HEK293T (cell line): ENCODE measurements at regions of chr7 and their contacts with region 1.

Region 1: DNA sequence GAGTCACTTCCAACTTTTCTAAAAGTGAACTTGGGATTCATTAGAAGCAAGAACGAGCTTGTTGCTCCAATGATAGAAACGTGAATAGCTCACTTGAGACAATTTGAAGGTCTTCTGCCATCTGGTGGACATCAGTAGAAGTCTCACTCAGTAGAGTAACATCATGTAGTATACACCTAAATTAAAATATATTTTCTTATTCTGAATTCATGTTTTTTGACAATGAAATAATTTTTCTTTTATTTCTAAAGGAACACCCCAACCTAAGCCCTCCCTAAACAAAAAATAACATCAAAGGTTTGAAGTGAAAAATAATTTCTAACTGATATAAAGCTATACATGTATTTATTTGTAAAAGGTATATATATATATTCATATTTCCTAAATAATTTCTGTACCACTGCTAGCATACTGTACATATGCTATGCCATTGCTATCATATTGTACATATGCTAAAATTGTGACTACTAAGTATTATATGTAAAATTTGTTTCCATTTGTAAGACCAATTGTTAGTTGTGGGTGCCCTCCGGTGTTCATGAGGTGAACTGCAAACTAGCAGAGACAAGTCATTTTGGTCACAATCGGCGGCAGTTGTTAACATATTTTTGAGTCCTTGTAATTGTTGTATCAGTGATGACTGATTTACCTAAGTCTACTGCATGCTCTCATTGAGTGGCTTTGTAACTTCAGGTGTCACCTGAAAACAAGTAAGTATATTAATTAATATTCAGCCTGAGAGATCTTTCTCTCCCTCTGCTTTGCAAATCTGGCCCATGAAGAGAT is 121.9 kb downstream of the PTPRZ1 start:
- DNase-seq: peak; percentile 54

Region 2: GRCh38 chr7:121752706-121753105 is 242.1 kb before region 1 on chr7:
- CTCF ChIA-PET with region 1: interaction called, 15 read pairs
- POLR2A ChIA-PET with region 1: no interaction called
- DNase-seq: peak; percentile 19

Region 3: GRCh38 chr7:122595885-122596284 is 601.1 kb after region 1 on chr7:
- CTCF ChIA-PET with region 1: interaction called, 13 read pairs
- POLR2A ChIA-PET with region 1: no interaction called
- DNase-seq: no peak